ENCODE measurements at regions of chr11 and their contacts with region 1.

Region 1: DNA sequence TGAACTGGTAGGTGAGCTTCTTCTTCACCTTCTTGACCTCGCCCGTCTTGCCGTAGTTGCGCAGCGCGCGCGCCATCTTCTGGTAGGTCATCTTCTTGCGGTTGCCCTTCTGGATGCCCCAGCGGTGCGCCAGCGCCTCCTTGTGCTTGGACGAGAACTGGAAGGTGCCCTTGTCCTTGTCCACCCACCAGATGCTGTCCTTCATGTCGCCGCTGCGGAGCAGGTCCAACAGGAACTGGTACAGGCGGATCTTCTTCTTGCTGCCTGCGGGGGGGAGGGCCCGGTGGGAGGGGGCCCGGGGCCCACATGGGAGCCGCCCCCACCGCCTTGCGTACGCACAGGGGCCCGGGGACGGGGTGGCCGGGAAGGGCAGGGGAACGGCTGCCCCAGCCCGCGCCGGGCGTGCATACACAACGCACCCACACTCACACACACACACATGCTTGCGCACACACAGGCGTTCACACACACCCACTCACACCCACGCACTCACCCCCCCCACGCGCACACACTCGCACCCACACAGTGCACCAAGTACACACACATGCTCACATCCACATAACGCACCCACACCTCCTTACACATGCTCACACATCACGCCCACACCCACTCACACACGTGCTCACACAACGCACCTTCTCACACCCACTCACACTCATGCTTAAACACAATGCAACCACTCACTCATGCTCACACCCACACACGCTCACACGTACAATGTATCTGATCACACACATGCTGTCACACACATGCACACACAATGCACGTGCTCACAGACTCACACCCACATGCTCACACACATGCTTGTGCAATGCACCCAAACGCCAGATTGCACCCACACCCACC is 3.0 kb upstream of the MYBPC3 start:
- DNase-seq: peak; percentile 89 to 98
- ATAC-seq: peak; percentile 92 to 97
- H3K4me3 ChIP-seq: peak overlapping the region; percentile 43
- H3K27ac ChIP-seq: peak overlapping the region; percentile 90 to 97
- H3K4me1 ChIP-seq: peaks cover 4% of the 10 kb centered on the region; the same call in 1 of the 3 replicates
- CTCF ChIP-seq: peak; percentile 100
- EP300 ChIP-seq: no peak
- POLR2A ChIP-seq: no peak
- RAD21 ChIP-seq: peak; percentile 99 to 100

Region 2: DNA sequence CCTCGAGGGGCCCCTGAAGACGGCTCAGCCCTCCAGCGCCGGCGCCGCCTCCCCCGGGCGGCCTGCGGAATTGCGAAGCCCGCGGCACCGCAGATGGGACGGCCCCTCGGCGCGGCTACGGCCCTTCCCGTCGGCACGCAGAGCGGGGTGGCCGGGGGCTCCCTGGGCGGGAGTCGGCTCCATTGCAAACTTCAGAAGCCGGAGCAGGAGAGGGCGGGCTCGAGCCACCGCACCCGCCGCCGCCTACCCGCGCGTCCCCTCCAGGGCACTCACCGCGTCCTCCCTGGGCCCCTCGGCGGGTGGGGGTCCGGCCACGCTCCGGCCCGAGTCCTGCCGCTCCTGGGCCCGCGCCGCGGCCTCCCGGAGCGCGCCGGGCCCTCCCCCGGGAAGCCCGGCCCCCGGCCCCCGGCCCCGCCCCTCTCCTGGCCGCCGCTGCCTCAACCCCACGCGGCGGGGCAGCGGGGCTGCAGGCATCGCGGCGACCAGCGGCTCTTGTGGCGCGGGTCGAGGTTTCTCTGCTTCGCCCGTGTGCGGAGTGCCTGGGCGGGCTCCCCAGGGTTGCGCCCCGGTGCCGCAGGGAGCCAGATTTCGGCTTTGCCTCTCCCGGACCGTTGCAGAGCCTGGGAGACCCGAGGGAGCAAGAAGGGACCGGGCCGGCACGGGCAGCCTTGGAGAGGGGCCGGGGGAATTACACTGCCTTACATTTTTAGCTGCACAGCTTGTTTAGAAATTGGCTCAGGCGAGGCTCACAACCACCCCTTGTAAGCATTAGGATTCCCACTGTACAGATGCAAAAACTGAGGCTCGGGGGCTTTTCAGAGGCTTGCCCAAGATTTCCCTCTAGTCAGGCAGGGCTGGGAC is 169.2 kb before region 1 on chr11 and contains the start of gene PACSIN3:
- CTCF ChIA-PET with region 1: interaction called, 12 read pairs
- POLR2A ChIA-PET with region 1: interaction called, 3 read pairs
- DNase-seq: peak; percentile 58 to 72
- ATAC-seq: peak; percentile 72 to 75
- H3K4me3 ChIP-seq: peak within 1 kb of the TSS; percentile 72
- H3K27ac ChIP-seq: peak within 1 kb of the TSS; percentile 84 to 98
- H3K4me1 ChIP-seq: peaks cover 47% of the 10 kb centered on the region
- CTCF ChIP-seq: no peak
- EP300 ChIP-seq: no peak
- POLR2A ChIP-seq: peak; percentile 59
- RAD21 ChIP-seq: no peak
- polyA plus RNA-seq, gene PACSIN3: 15.8 and 16.5 TPM in 2 replicates

Region 3: GRCh38 chr11:47233989-47234668 is 121.4 kb before region 1 on chr11:
- CTCF ChIA-PET with region 1: interaction called, 50 read pairs
- POLR2A ChIA-PET with region 1: interaction called, 6 read pairs
- DNase-seq: peak; percentile 67 to 90
- ATAC-seq: peak; percentile 88 to 90
- H3K4me3 ChIP-seq: peak overlapping the region; percentile 21
- H3K27ac ChIP-seq: peak overlapping the region; percentile 79 to 89
- H3K4me1 ChIP-seq: peaks cover 46% of the 10 kb centered on the region
- CTCF ChIP-seq: peak; percentile 67
- EP300 ChIP-seq: peak; percentile 25 to 58; a peak in 2 of 5 replicates
- POLR2A ChIP-seq: no peak
- RAD21 ChIP-seq: peak; percentile 75 to 78

Region 4: GRCh38 chr11:47269002-47269828 is 86.3 kb before region 1 on chr11:
- CTCF ChIA-PET with region 1: interaction called, 30 read pairs
- POLR2A ChIA-PET with region 1: interaction called, 6 read pairs
- DNase-seq: peak; percentile 88 to 89
- ATAC-seq: peak; percentile 83 to 86
- H3K4me3 ChIP-seq: peak overlapping the region; percentile 72
- H3K27ac ChIP-seq: peak overlapping the region; percentile 95 to 99
- H3K4me1 ChIP-seq: peaks cover 30% of the 10 kb centered on the region
- CTCF ChIP-seq: no peak; the same call in 2 of the 3 replicates
- EP300 ChIP-seq: no peak
- POLR2A ChIP-seq: peak; percentile 55
- RAD21 ChIP-seq: peak in 1 of 2 experiments; percentile 8; a peak in 1 of 5 replicates

Region 5: DNA sequence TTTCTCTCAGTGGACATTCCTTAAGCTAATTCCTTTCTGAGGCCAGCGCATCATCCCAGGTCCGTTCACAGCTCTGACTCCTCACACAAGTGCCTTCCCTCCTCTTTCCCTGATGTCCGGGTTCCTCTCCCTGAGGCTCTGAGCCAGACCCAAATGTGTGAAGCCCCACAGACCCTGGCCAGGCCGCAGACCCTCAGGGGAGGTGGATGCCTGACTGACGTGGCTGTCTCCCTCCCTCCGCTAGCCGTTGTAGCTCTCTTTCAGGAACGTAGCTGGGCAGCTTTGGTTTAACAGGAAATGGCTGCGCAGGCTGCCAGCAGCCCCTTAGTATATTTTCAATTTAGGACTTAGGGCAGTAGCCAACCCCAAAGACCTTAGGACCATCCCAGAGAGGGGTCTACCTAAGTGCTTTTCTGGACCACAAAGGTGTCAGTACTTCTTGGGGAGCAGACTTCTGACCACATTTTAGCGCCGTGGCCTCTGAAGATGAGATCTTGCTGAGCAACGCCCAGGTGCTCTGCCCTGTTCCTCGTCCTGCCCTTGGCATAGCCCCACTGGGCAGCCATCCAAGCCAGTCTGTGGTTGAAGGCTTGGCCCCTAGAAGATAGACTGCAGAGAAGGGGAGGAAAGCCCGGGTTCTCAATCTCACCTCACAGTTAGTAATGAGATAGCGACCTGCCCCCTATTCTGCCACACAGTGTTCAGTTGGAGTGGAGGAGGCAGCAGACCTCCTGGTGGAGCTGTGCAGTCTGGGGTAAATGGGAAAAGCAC is 30.1 kb before region 1 on chr11:
- CTCF ChIA-PET with region 1: interaction called, 11 read pairs
- POLR2A ChIA-PET with region 1: no interaction called
- DNase-seq: no peak
- ATAC-seq: no peak
- H3K4me3 ChIP-seq: no peak overlapping the region
- H3K27ac ChIP-seq: no peak overlapping the region
- H3K4me1 ChIP-seq: no peaks in the 10 kb centered on the region
- CTCF ChIP-seq: no peak
- EP300 ChIP-seq: no peak
- POLR2A ChIP-seq: no peak
- RAD21 ChIP-seq: no peak

Region 6: DNA sequence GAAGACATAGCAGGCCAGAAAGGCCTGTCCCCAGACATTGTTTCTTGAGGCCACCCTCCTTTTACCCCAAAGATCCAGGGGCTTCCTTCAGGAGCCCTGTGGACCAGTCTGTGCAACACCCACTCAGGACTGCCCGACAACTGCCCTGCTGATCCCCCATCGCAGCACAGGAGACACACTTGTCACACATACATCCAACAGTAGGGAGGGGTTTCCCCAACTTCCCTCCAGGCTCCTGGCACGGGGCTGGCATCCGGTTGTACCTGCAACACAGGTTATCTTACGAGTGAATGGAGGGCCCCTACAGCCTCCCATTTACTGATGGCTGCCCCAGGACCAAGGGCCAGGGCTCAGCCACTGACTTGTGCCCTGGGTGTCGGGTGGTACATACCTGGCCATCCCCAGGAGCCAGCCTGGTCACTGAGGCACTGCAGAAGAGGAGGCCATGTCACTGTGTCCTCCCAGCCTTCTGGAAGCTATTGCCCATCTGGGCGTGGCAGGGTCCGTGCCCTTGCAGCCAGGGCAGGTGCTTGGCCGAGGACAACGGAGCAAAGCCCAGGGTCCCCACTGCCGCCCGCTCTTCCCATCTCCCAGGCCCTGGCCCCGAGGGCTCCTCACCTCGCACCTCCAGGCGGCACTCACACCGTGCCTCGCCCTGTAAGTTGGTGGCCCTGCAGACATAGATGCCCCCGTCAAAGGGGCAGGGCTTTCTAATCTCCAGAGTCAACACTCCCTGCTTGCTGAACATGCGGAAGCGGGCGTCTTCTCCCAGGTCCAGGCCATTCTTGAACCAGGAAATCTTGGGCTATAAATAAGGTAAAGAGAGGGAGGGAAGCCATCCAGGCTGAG is 23.8 kb before region 1 on chr11:
- CTCF ChIA-PET with region 1: interaction called, 16 read pairs
- POLR2A ChIA-PET with region 1: interaction called, 4 read pairs
- DNase-seq: no peak
- ATAC-seq: no peak
- H3K4me3 ChIP-seq: no peak overlapping the region
- H3K27ac ChIP-seq: no peak overlapping the region
- H3K4me1 ChIP-seq: no peaks in the 10 kb centered on the region
- CTCF ChIP-seq: no peak
- EP300 ChIP-seq: no peak
- POLR2A ChIP-seq: no peak
- RAD21 ChIP-seq: no peak

Region 7: DNA sequence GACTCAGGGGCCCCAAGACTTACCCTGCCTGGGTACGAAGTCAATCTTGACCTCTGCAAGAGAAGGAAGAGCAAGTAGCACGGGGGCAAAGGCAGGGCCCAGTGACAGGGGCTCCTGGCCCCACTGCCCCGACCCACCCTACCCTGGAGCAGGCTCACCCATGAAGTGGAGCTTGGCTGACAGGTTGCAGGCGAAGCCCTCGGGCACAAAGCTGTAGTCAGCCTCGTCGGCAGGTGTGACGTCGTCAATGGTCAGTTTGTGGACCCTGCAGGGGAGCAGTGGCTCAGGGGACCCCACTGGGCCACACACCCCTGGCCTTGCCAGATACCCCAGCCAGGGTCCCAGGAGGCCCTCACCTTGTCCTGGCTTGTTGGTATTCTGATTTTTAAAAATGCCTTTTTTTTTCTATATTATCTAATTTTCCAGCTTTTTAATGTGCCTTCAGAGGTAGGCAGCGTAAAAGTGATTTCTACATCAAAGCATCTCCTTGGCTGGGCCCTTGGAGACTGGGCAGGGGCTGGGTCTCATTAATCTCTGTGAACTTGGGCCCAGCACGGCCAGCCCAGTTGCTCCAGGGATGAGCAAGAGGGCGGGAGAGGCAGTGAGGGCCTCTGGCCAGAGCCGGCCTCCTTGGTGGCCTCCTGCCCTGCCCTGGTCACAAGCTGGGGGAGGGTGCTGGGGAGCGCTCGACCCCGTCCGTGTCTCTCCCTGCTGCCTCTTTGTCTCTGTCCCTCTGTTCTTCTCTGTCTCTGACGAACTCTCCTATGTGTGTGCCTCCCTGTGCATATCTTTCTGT is 14.3 kb before region 1 on chr11:
- CTCF ChIA-PET with region 1: interaction called, 40 read pairs
- POLR2A ChIA-PET with region 1: interaction called, 4 read pairs
- DNase-seq: no peak
- ATAC-seq: peak; percentile 32 to 33; a peak in 4 of 6 replicates
- H3K4me3 ChIP-seq: no peak overlapping the region
- H3K27ac ChIP-seq: no peak overlapping the region
- H3K4me1 ChIP-seq: peaks cover 10% of the 10 kb centered on the region; the same call in 2 of the 3 replicates
- CTCF ChIP-seq: no peak
- EP300 ChIP-seq: no peak
- POLR2A ChIP-seq: no peak
- RAD21 ChIP-seq: no peak